HEK293 (cell line): ENCODE measurements at regions of chr7 and their contacts with region 1.

Region 1: DNA sequence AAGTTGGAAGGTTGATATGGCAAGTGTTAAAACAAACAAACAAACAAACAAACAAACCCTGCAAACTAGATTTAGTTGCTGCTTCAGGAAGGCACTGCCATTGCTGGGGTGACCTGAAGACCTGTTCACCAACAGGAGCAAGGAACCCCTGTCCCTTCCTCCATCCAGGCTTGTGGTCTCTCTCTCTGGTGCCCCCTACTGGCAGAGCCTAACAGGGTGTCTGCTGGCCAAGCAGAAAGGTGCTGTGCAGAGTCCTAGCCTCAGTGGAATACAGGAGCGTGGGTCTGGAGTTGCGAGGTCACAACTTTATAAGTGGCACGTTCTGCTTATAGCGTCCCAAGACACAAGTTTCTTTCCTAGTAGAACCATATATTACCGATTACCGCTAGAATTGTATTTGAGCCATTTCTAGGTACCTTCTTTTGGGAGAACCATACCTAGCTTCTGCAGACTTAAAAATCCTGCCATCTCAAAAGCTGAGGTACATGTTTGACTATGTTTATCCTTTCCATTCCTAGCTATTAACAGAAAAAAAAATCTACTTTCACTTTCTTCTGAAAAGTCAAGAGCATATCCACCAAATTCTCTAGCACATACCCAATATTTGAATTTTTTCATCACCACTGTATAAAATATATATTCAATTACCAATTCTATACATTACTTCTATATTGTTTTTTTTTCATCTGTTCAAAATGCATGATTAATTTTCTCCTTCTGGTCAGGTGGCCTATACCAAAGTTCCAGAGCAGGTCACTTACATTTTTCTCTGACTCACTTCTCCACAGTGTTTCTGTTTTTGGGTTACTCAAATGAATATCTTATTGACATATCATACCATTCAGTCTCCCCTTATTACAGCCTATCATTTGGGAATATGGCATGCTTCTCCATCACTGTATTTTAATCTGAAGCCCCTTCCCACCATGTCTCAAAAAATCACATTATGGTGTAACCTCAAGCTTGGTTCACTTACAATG is 29.1 kb upstream of the CALD1 start:
- H3K4me3 ChIP-seq: no peak overlapping the region
- H3K27ac ChIP-seq: no peak overlapping the region
- H3K4me1 ChIP-seq: no peaks in the 10 kb centered on the region
- CTCF ChIP-seq: peak; percentile 50; the same call in 1 of the 2 replicates

Region 2: DNA sequence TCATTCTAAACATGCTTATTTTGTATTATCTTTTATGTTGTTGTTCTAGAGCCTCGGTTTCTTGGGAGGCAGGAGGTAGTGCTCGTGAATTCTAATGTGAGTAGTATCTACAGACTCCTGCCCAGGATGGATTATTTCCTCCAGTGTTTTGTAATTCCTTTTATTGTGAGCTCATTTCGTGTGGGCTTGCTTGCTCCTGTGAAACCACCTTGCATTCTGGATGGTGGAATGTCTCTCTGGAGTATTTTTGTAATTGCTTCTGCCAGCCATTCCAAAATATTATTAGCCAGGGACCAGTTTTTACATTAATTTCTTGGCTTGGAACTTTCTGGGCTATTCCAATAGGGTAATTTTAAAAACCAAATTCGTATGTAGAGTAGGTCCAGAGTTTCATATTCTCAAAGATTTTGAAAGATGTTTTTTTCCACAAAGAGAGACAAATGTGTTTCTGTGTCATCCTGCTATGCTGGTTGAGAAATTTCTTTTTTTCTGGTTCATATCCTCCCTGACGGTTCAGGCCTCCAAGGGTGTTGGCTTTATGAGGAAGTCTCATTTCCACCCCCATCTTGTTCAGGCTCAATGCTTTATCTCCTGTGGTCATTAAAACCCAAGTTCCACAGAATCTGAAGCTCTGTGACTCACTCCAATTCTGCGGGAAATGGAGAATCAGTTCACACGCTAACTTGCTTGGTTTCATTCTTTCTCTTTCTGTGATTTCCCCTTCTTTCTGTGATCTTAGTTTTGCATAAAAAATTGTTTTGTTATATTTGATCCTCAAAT is 12.6 kb before region 1 on chr7:
- CTCF ChIA-PET with region 1: interaction called, 12 read pairs
- POLR2A ChIA-PET with region 1: no interaction called
- H3K4me3 ChIP-seq: no peak overlapping the region
- H3K27ac ChIP-seq: no peak overlapping the region
- H3K4me1 ChIP-seq: no peaks in the 10 kb centered on the region
- CTCF ChIP-seq: no peak

Region 3: GRCh38 chr7:134784251-134785049 is 34.1 kb after region 1 on chr7:
- CTCF ChIA-PET with region 1: interaction called, 12 read pairs
- POLR2A ChIA-PET with region 1: no interaction called
- H3K4me3 ChIP-seq: no peak overlapping the region
- H3K27ac ChIP-seq: no peak overlapping the region
- H3K4me1 ChIP-seq: 0 out of 2 replicates have a peak, but pooled peaks cover 3% of the 10 kb centered on the region
- CTCF ChIP-seq: no peak

Region 4: GRCh38 chr7:135121868-135122267 is 371.5 kb after region 1 on chr7:
- CTCF ChIA-PET with region 1: no interaction called
- POLR2A ChIA-PET with region 1: no interaction called
- H3K4me3 ChIP-seq: no peak overlapping the region
- H3K27ac ChIP-seq: no peak overlapping the region
- H3K4me1 ChIP-seq: no peaks in the 10 kb centered on the region
- CTCF ChIP-seq: no peak